Heart left ventricle (tissue), 16 donors: ENCODE measurements at regions of chr12 and their contacts with region 1.

Region 1: DNA sequence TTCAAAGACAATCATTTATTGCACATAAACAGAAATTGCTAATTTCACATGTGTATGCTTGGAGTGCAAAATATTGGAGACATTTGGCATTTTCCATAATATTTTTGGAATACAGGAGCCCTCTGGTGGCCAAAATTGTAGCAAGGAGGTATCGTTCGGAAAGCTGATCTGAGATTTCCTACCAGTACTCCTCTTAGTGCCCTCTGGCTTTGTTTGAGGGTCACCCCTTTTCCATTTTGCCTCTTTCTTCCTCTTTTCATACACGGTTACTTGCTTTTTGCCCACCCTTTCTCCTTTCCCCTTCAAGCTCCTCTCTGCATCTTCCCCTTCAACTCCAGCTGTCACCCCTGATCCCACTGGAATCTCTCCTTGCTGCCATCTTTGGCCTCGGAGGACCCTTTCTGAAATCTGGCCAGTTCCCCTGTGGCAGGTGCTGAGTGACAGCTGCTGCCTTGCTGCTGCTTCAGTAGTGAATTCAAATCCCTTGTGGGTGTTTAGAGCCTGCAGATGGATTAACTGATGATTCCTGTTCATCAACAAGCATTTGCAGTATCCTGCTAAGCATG is 164.6 kb upstream of the PARP11 start:
- DNase-seq: peak in 1 of 5 donors; percentile 34
- ATAC-seq: peak in 1 of 4 donors; percentile 20
- H3K4me3 ChIP-seq: no peak overlapping the region
- H3K27ac ChIP-seq: no peak overlapping the region
- H3K4me1 ChIP-seq: peaks cover 0 to 2% (median 0%) of the 10 kb centered on the region in 12 donors
- H3K27me3 ChIP-seq: peaks cover 0 to 4% (median 0%) of the 10 kb centered on the region in 9 donors
- CTCF ChIP-seq: peak; percentile 52 to 80 (median 70)
- POLR2A ChIP-seq: no peak

Region 2: DNA sequence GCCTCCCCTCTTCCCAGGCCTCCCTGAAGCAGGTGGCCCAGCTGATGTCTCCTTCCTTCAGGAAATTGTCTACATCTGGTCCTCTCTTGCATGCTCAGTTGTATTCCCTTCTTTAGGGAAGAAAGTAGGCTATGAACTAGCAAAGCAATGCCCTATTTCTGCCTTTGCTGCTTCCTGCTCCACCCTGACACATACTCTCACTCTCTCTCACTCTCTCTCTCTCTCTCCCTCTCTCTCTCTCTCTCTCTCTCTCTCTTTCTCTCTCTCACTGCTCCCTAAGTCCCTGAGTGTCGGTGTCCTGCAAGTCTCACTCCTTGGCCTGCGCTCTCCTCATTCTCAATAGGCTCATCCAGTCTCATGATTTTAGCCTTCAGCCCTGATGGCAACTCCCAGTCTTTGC is 145.2 kb before region 1 on chr12:
- intact Hi-C with region 1: loop called in 8 of 10 experiments (anchors 2 to 5 kb)
- DNase-seq: no peak
- ATAC-seq: no peak
- H3K4me3 ChIP-seq: no peak overlapping the region
- H3K27ac ChIP-seq: no peak overlapping the region
- H3K4me1 ChIP-seq: peaks cover 0 to 29% (median 0%) of the 10 kb centered on the region in 12 donors
- H3K27me3 ChIP-seq: peaks cover 0 to 20% (median 0%) of the 10 kb centered on the region in 9 donors
- CTCF ChIP-seq: no peak
- POLR2A ChIP-seq: no peak

Region 3: GRCh38 chr12:3988519-3989448 is 49.0 kb before region 1 on chr12:
- intact Hi-C with region 1: loop called in 2 of 10 experiments (anchors 5 kb)
- DNase-seq: no peak
- ATAC-seq: no peak
- H3K4me3 ChIP-seq: no peak overlapping the region
- H3K27ac ChIP-seq: peak overlapping the region in 1 of 12 donors; percentile 10
- H3K4me1 ChIP-seq: no peaks in the 10 kb centered on the region
- H3K27me3 ChIP-seq: peaks cover 0 to 40% (median 4%) of the 10 kb centered on the region in 9 donors
- CTCF ChIP-seq: no peak
- POLR2A ChIP-seq: no peak

Region 4: GRCh38 chr12:3998968-3999826 is 38.6 kb before region 1 on chr12:
- intact Hi-C with region 1: loop called in 4 of 10 experiments (anchors 2 to 5 kb)
- DNase-seq: no peak
- ATAC-seq: no peak
- H3K4me3 ChIP-seq: no peak overlapping the region
- H3K27ac ChIP-seq: no peak overlapping the region
- H3K4me1 ChIP-seq: no peaks in the 10 kb centered on the region
- H3K27me3 ChIP-seq: peaks cover 0 to 13% (median 0%) of the 10 kb centered on the region in 9 donors
- CTCF ChIP-seq: no peak
- POLR2A ChIP-seq: no peak